ENCODE measurements at regions of chr17 and their contacts with region 1.

Region 1: DNA sequence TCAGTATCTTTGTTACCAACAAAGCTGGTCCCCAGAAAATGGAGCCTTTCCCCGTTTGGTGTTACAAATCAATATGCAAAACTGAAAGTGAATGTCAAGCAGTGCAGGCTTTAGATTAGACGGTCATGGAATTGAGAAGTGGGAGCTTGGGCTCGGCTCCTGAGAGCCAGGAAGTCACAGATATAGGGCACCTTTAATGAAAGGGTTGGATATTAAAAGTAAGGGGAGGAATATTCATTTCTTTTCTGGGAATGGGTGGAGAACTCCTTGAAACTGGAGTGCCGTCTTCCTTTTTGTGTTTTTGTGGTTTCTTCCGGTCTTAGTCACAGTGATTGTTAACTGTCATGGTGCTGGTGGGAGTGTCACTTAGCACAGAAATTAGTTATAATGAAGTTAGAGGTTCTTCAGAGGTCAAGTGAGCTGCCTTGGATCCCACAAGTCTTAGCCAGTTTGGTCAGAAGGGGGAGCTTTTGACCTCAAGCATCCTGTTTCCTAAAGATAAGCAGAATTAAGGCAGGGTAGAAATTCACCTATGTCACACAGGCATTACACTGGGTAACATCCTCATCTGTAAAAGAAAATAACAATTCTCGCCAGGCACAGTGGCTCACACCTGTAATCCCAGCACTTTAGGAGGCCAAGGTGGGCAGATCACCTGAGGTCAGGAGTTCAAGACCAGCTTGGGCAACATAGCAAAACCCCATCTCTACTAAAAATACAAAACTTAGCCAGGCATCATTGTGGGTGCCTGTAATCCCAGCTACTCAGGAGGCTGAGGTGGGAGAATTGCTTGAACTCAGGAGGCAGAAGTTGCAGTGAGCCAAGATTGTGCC is 9.6 kb upstream of the EIF1 start:
- DNase-seq: no peak
- ATAC-seq: peak; percentile 64
- H3K4me3 ChIP-seq: peak overlapping the region in 1 of 2 experiments; percentile 21; a peak in 3 of 4 replicates
- H3K27ac ChIP-seq: peak overlapping the region; percentile 67
- H3K4me1 ChIP-seq: peaks cover 8 to 18% of the 10 kb centered on the region in 2 experiments
- H3K27me3 ChIP-seq: no peaks in the 10 kb centered on the region
- CTCF ChIP-seq: 0 out of 6 replicates have a peak, but pooled peaks of 2 of the 3 experiments have one; percentile 15 to 23
- POLR2A ChIP-seq: no peak
- RAD21 ChIP-seq: peak; percentile 34; the same call in 1 of the 2 replicates

Region 2: GRCh38 chr17:41695954-41696756 is 17.0 kb after region 1 on chr17:
- CTCF ChIA-PET with region 1: no interaction called
- POLR2A ChIA-PET with region 1: interaction called, 17 read pairs
- RAD21 ChIA-PET with region 1: no interaction called
- intact Hi-C with region 1: no loop called
- DNase-seq: peak; percentile 53
- ATAC-seq: peak; percentile 51
- H3K4me3 ChIP-seq: no peak overlapping the region
- H3K27ac ChIP-seq: no peak overlapping the region
- H3K4me1 ChIP-seq: no peaks in the 10 kb centered on the region
- H3K27me3 ChIP-seq: no peaks in the 10 kb centered on the region
- CTCF ChIP-seq: peak; percentile 53 to 84 (median 80); a peak in 5 of 6 replicates
- POLR2A ChIP-seq: no peak
- RAD21 ChIP-seq: peak; percentile 52

Region 3: DNA sequence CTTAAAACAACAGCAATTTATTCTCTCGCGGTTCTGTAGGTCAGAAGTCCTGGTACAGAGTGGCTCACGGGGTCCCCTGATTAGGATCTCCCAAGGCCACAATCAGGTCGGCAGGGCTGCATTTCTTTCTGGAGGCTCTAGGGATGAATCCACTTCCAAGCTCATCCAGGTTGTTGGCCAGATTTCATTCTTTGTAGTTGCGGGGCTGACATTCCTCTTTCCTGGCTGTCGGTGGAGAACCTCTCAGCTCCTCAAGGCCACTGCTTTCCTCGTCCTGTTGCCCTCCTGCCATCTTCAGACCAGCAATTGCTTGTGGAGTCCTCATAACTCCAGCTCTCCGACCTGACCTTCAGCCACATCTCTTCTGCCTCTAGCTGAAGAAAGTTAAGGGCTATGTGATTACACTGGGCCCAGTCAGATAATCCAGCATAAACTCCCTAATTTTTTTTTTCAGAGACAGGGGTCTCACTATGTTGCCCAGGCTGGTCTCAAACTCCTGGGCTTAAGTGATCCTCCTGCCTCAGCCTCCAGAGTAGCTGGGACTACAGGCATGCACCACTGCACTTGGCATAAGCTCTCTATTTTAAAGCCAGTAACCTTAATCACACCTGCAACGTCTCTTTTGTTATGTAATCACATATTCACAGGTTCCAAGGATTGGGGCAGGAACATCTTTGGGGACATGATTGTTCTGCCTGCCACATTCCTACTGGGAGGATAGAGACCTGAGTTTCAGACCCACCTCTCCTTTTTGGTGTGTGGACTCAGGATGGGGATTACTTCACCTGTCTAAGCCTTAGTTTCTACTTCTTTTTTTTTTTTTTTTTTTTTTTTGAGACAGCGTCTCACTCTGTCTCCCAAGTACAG is 28.9 kb after region 1 on chr17:
- CTCF ChIA-PET with region 1: no interaction called
- POLR2A ChIA-PET with region 1: no interaction called
- RAD21 ChIA-PET with region 1: no interaction called
- intact Hi-C with region 1: no loop called
- DNase-seq: no peak
- ATAC-seq: no peak
- H3K4me3 ChIP-seq: no peak overlapping the region
- H3K27ac ChIP-seq: no peak overlapping the region
- H3K4me1 ChIP-seq: peaks cover 0 to 6% of the 10 kb centered on the region in 2 experiments; a peak in 2 of 4 replicates
- H3K27me3 ChIP-seq: no peaks in the 10 kb centered on the region
- CTCF ChIP-seq: no peak
- POLR2A ChIP-seq: no peak
- RAD21 ChIP-seq: no peak